ENCODE measurements at regions of chr1 and their contacts with region 1.

Region 1: DNA sequence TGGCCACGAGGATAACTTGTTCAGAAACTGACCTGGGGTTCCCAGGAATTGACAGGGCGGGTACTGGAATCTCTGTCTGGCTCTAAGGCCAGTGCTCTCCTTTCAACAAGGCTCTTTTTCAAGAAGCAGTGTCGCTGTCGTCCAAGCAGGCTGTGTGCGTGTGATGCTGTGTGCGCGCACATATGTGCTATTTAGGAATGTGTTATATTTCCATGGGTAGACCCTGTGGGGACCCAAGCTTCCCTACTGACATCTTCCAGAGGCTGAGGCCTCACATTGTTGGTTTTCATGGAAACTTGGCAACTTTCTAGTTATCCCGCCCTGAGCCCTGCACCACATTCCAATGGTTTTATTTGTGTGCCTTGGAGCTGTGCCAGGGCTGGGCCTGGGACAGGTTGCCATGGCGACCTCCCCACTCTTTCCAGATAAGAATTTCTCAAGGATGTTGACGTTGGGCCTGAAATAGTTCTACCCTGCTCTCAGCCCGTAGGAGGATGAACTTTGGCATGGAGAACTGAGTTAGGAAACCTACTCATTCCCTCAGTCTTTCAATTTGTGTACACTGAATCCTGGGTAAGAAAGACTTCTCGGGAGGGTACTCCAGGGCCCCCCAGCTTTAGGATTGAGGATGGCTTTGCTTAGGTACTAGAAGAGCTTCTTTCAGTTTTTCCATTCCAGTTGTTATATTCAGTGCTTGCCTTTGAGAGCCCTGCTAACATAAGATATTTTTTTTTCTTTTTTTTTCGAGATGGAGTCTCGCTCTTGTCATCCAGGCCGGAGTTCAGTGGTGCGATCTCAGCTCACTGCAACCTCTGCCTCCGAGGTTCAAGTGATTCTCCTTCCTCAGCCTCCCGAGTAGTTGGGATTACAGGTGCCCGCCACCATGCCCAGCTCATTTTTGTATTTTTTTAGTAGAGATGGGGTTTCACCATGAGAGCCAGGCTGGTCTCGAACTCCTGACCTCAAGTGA is 38.8 kb upstream of the SRSF10 start:
- DNase-seq: peak; percentile 99
- H3K4me3 ChIP-seq: no peak overlapping the region
- H3K27me3 ChIP-seq: no peaks in the 10 kb centered on the region
- CTCF ChIP-seq: no peak

Region 2: GRCh38 chr1:23959041-23959460 is 59.8 kb before region 1 on chr1:
- CTCF ChIA-PET with region 1: no interaction called
- POLR2A ChIA-PET with region 1: no interaction called
- DNase-seq: peak; percentile 60
- H3K4me3 ChIP-seq: peak overlapping the region; percentile 85
- H3K27me3 ChIP-seq: no peaks in the 10 kb centered on the region
- CTCF ChIP-seq: peak; percentile 36

Region 3: GRCh38 chr1:24003331-24003972 is 15.4 kb before region 1 on chr1:
- CTCF ChIA-PET with region 1: interaction called, 10 read pairs
- POLR2A ChIA-PET with region 1: no interaction called
- DNase-seq: no peak
- H3K4me3 ChIP-seq: no peak overlapping the region
- H3K27me3 ChIP-seq: no peaks in the 10 kb centered on the region; the same call in 1 of the 2 replicates
- CTCF ChIP-seq: no peak